RWPE1 (cell line): ENCODE measurements at regions of chr6 and their contacts with region 1.

Region 1: GRCh38 chr6:13487122-13488014 is at the start of gene GFOD1:
- DNase-seq: peak; percentile 90
- H3K27ac ChIP-seq: peak within 1 kb of the TSS; percentile 92
- CTCF ChIP-seq: no peak

Region 2: DNA sequence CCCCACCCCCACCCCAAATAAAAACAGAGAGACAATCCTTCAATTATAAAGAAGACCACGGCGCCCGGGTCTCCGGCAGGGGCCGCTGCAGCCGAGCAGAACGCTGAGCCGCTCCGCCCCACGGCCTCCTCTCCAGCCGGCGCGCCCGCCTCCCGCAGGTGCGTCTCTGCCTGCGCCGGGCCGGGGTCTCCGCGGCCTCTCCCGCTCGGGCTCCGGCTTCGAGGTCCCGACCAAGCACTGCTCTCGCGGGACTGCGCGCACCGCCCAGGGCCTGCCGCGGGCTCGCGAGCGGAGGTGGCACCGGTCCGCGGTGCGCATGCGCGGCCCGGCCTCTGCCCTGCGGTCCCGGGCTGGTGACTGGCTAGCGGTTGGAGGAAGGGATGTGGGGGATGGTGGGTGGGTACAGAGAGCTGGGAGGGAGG is 86.8 kb after region 1 on chr6:
- CTCF ChIA-PET with region 1: interaction called, 11 read pairs
- POLR2A ChIA-PET with region 1: interaction called, 3 read pairs
- DNase-seq: peak; percentile 99
- H3K27ac ChIP-seq: peak overlapping the region; percentile 97
- CTCF ChIP-seq: peak; percentile 71